Ovary (tissue), 10 donors: ENCODE measurements at regions of chr11 and their contacts with region 1.

Region 1: GRCh38 chr11:44538375-44539054 is 26.9 kb upstream of the CD82 start:
- DNase-seq: peak; percentile 64 to 87 (median 79)
- H3K4me3 ChIP-seq: no peak overlapping the region
- H3K27ac ChIP-seq: no peak overlapping the region
- H3K4me1 ChIP-seq: no peaks in the 10 kb centered on the region
- H3K27me3 ChIP-seq: no peaks in the 10 kb centered on the region
- CTCF ChIP-seq: peak; percentile 82 to 93 (median 92)
- EP300 ChIP-seq: no peak
- POLR2A ChIP-seq: no peak

Region 2: GRCh38 chr11:44095506-44096394 is 442.8 kb before region 1 on chr11 and contains the start of gene EXT2:
- intact Hi-C with region 1: loop called (anchors 5 to 10 kb)
- DNase-seq: peak; percentile 87 to 94 (median 90)
- H3K4me3 ChIP-seq: peak within 1 kb of the TSS; percentile 83
- H3K27ac ChIP-seq: peak within 1 kb of the TSS; percentile 9 to 54
- H3K4me1 ChIP-seq: peaks cover 2% of the 10 kb centered on the region
- H3K27me3 ChIP-seq: no peaks in the 10 kb centered on the region
- CTCF ChIP-seq: peak; percentile 87 to 90 (median 88)
- EP300 ChIP-seq: no peak
- POLR2A ChIP-seq: peak; percentile 51
- total RNA-seq, gene EXT2: 42.6 to 65.8 (median 47.1) TPM

Region 3: DNA sequence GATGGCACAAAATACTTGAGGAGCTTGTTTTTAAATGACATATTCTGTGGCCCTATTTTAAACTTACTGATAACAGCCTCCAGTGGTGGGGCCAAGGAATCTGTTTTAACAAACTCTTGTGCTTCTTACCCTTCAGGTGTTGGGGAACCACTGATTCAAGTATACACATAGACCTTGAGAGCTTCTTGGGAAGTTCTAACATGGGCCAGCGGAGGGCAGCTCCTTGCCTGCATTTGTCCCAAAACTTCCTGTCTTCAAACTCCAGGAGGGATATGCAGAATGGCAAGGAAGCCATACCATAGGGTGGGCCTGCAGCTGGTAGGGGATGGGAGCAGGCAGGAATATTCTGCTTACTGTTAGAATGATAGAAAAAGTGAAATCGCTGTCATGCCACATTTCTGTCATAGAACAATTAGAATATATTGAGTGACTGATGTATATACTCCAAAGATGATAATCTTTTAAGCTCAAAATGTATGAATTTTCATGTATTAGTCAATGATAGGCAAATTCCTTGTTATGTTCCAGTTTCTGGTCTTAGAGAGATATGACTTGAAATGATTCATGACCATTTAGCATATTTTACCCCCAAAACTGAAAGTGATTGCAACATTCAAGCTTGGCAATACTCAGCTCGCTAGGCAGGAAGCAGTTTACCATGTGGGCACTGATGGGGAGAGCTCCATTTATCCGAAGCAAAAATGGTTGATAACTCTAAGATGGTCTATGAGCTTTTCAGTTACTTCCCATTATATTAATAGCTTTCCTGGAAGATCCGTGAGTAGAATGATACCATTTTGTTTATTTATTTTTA is 433.8 kb before region 1 on chr11:
- intact Hi-C with region 1: loop called in 3 of 4 experiments (anchors 10 kb)
- DNase-seq: no peak
- H3K4me3 ChIP-seq: no peak overlapping the region
- H3K27ac ChIP-seq: no peak overlapping the region
- H3K4me1 ChIP-seq: peaks cover 1% of the 10 kb centered on the region
- H3K27me3 ChIP-seq: no peaks in the 10 kb centered on the region
- CTCF ChIP-seq: no peak
- EP300 ChIP-seq: no peak
- POLR2A ChIP-seq: no peak

Region 4: GRCh38 chr11:44110231-44110679 is 428.3 kb before region 1 on chr11:
- intact Hi-C with region 1: loop called in 3 of 4 experiments (anchors 5 to 10 kb)
- DNase-seq: peak; percentile 19 to 54 (median 43)
- H3K4me3 ChIP-seq: no peak overlapping the region
- H3K27ac ChIP-seq: no peak overlapping the region
- H3K4me1 ChIP-seq: peaks cover 1% of the 10 kb centered on the region
- H3K27me3 ChIP-seq: no peaks in the 10 kb centered on the region
- CTCF ChIP-seq: peak; percentile 14 to 44 (median 29)
- EP300 ChIP-seq: no peak
- POLR2A ChIP-seq: no peak

Region 5: GRCh38 chr11:44133335-44133946 is 405.1 kb before region 1 on chr11:
- intact Hi-C with region 1: loop called in 1 of 4 experiments (anchors 10 kb)
- DNase-seq: no peak
- H3K4me3 ChIP-seq: no peak overlapping the region
- H3K27ac ChIP-seq: no peak overlapping the region
- H3K4me1 ChIP-seq: no peaks in the 10 kb centered on the region
- H3K27me3 ChIP-seq: no peaks in the 10 kb centered on the region
- CTCF ChIP-seq: peak in 1 of 3 donors; percentile 28
- EP300 ChIP-seq: no peak
- POLR2A ChIP-seq: no peak

Region 6: GRCh38 chr11:44286268-44286880 is 252.1 kb before region 1 on chr11:
- intact Hi-C with region 1: loop called (anchors 5 kb)
- DNase-seq: peak in 3 of 5 donors; percentile 36 to 54 (median 40)
- H3K4me3 ChIP-seq: no peak overlapping the region
- H3K27ac ChIP-seq: no peak overlapping the region
- H3K4me1 ChIP-seq: no peaks in the 10 kb centered on the region
- H3K27me3 ChIP-seq: no peaks in the 10 kb centered on the region
- CTCF ChIP-seq: peak; percentile 38 to 65 (median 64)
- EP300 ChIP-seq: no peak
- POLR2A ChIP-seq: no peak